Left cardiac atrium (tissue), 4 donors: ENCODE measurements at regions of chr3 and their contacts with region 1.

Region 1: DNA sequence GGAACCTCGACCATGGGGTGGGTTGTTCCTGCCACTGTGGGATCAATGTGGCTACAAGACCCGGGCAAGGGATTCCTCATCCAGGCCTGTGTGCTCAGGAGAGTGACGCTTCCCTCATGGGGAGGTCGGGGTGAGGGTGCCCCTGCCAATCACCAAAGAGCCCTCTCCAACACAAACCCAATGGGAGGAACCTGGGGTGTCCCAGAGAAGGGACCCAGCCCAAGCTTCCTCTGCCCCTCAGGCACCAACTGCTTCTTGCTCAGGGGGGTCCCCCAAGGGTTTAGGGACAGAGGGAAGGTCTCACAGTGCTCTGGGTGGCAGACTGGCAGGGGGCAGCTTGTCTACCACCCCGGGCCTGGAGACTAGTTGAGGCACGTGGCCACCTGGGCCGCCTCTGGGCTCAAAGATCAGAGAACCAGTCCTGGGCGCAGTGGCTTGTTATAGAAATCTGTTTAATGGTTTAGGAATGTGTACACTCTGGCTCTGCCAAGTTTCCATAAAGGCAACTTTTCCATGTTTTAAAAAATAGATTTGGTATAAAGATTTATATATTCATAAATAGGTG is 26.6 kb downstream of the GP9 start:
- DNase-seq: peak; percentile 63
- ATAC-seq: peak; percentile 50 to 70

Region 2: GRCh38 chr3:128969993-128970739 is 117.1 kb before region 1 on chr3:
- intact Hi-C with region 1: loop called in 1 of 2 experiments (anchors 2 kb)
- DNase-seq: peak; percentile 48
- ATAC-seq: peak in 1 of 2 donors; percentile 44

Region 3: DNA sequence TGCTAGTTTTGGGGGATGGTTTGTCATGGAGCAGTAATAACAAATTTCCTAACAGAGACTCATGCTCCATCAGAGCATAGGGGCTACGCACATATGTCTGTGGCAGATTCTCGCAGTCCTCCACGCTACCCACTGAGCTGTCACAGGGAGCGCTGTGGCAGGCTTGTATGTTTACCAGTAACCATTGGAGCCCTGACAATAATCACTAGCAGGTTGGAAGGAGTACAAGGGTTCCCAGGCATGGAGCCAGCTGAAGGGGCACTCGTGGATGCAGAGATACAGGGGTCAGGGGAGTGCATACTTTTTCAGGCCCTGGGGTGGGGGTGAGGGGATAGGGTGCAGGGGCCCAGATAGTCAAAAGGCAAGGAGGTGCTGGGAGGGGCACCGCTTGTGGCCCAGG is 34.5 kb before region 1 on chr3:
- intact Hi-C with region 1: loop called in 1 of 2 experiments (anchors 2 kb)
- DNase-seq: peak; percentile 75
- ATAC-seq: peak; percentile 74 to 87